PC-3 (cell line): ENCODE measurements at regions of chr17 and their contacts with region 1.

Region 1: GRCh38 chr17:64357191-64357981 is 33.3 kb downstream of the PECAM1 start:
- DNase-seq: peak; percentile 76
- ATAC-seq: peak; percentile 62
- H3K4me3 ChIP-seq: no peak overlapping the region
- H3K27ac ChIP-seq: peak overlapping the region; percentile 84
- H3K4me1 ChIP-seq: peaks cover 46% of the 10 kb centered on the region
- H3K27me3 ChIP-seq: no peaks in the 10 kb centered on the region
- CTCF ChIP-seq: no peak

Region 2: DNA sequence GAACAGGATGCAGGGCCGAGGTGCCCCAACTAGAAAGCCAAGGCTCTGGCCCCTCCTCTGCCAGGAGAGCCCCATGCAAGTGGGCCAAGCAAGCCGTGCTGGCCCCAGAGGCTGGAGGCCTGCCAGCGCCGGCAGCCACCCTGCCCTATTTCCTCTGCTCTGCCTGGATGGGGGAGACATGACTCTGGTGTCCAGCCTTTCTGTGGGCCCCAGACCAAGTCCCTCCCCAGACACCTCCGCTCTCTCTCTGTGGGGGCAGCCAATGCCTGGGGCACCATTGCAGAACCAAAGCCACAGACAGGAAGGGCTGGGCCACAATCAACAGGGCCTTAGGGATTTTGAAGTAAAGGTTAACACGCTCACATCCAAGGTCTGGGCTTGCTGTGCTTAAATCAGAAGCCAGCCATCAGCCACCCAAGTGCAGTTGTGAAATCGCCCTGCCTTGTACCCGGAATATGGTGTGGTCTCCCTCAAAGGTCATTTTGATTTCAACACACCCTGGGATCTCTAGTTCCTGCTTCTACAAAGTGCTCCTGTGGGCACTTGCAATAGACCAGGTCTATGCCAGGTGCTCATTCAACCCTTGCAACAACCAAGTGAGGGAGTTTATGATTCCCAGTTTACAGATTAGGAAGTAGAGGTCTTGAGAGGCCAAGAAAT is 30.9 kb before region 1 on chr17:
- CTCF ChIA-PET with region 1: no interaction called
- POLR2A ChIA-PET with region 1: no interaction called
- intact Hi-C with region 1: loop called (anchors 2 kb)
- DNase-seq: peak; percentile 98
- ATAC-seq: peak; percentile 78
- H3K4me3 ChIP-seq: no peak overlapping the region
- H3K27ac ChIP-seq: peak overlapping the region; percentile 97
- H3K4me1 ChIP-seq: peaks cover 50% of the 10 kb centered on the region
- H3K27me3 ChIP-seq: no peaks in the 10 kb centered on the region
- CTCF ChIP-seq: no peak

Region 3: DNA sequence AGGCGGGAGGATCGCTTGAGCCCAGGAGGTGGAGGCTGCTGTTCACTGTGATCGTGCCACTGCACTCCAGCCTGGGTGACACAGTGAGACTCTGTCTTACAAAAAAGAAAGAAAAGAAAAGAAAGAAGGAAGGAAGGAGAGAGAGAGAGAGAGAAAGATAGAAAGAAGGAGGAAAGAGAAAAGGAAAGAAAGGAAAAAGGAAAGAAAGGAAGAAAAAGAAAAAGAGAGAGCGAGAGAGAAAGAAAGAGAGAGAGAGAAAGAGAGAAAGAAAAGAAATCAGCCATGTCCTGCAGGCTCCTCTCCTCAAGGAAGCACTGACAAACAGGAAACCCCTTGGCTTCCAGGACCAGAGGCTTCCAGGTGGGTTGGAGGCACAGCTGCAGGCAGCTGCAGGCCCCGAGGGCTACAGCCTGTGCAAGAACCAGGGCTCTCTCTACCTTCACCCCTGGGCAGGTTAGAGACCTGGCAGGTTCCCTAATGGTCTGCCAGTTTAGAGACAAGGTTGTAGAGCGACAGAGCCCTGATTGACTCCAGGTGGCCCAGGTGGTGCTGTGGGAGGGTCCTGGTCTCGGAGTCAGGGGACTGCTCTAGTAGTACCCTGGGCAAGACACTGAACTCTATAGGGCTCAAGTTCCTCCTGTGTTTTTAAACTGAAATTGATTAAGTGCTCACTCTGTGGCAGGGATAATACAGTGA is 20.5 kb before region 1 on chr17:
- CTCF ChIA-PET with region 1: no interaction called
- POLR2A ChIA-PET with region 1: interaction called, 18 read pairs
- intact Hi-C with region 1: no loop called
- DNase-seq: no peak
- ATAC-seq: no peak
- H3K4me3 ChIP-seq: no peak overlapping the region
- H3K27ac ChIP-seq: 0 out of 2 replicates have a peak overlapping the region, but pooled peaks have one; percentile 6
- H3K4me1 ChIP-seq: peaks cover 49% of the 10 kb centered on the region
- H3K27me3 ChIP-seq: no peaks in the 10 kb centered on the region
- CTCF ChIP-seq: no peak